ENCODE measurements at regions of chr9 and their contacts with region 1.

Region 1: DNA sequence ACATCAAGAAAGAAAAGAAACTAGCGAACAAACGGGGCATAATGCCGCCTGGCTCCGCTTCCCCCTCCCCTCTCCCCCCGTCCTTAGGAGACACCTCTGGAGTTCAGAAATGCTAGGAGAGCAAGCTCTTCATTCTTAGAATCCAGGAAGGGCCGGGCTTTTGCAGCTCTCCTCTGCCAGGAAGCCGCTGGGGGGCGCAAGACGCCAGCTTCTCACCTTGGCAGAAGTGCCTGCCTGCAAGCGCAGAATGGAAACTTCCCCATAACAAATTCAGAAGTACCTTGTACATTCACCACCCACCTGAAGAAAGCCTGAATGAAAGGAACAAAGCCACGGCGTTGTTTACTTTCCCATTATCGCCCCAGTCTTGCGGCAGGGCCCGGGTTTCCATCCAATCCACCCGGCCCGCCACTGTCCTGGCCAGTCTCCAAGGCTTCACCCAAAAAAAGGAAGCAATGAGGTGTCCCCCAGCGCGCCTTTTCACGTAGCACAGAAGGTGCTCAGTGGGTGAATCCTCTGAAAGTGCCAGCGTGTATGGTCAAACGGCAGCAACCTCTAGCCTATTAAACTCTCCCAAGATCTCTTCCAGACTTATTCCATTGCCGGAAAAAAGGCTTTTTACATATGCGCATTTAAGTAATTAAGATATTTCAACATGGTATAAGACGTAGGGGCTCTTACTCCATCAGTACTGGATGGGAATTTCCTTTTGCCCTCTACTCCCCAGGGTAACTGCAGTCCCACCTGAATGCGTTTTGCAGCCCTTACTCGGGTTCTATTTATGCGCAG is 1.6 kb upstream of the GADD45G start:
- DNase-seq: peak; percentile 77
- H3K4me3 ChIP-seq: no peak overlapping the region
- H3K27ac ChIP-seq: no peak overlapping the region
- H3K4me1 ChIP-seq: peaks cover 34% of the 10 kb centered on the region
- H3K27me3 ChIP-seq: peaks cover 7 to 14% of the 10 kb centered on the region in 2 experiments
- CTCF ChIP-seq: peak; percentile 85 to 93
- POLR2A ChIP-seq: no peak

Region 2: DNA sequence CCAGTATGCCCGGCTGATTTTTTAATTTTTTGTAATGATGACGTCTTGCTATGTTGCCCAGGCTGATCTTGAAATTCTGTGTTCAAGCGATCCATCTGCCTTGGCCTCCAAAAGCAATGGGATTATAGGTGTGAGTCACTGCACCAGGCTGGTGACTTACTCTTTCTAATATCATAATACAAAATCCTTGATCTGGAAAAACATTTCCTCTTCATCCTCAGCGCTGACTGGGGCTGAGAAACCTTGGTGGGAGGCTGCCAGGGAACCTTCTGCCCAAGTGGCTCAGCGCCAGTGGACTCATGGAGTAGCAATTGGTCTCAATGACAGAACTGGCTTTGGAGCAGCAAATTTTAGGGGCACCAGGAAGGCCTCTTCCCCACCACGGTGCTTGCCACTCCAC is 87.8 kb before region 1 on chr9:
- CTCF ChIA-PET with region 1: no interaction called
- POLR2A ChIA-PET with region 1: no interaction called
- dilution Hi-C with region 1: no loop called
- intact Hi-C with region 1: no loop called
- DNase-seq: no peak
- H3K4me3 ChIP-seq: no peak overlapping the region
- H3K27ac ChIP-seq: no peak overlapping the region
- H3K4me1 ChIP-seq: peaks cover 4% of the 10 kb centered on the region
- H3K27me3 ChIP-seq: peaks cover 5 to 10% of the 10 kb centered on the region in 2 experiments
- CTCF ChIP-seq: no peak
- POLR2A ChIP-seq: no peak

Region 3: DNA sequence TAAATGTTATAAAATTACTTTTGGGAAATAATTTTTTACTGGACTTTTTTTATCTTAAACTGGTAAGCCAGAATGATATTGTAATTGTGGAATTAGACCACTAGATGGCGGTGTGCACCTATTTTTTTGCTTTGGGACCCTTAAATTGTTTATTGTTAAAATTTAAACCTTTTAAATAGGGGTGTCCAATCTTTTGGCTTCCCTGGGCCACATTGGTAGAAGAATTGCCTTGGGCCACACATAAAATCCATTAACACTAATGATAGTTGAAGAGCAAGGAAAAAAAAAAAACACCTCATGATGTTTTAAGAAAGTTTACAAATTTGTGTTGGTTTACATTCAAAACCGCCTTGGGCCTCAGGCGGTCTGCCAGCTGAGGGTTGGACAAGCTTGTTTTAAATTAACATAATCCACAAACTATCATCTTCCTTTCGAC is 26.8 kb before region 1 on chr9:
- CTCF ChIA-PET with region 1: interaction called, 35 read pairs
- POLR2A ChIA-PET with region 1: no interaction called
- dilution Hi-C with region 1: no loop called
- intact Hi-C with region 1: loop called (anchors 2 kb)
- DNase-seq: peak; percentile 48
- H3K4me3 ChIP-seq: no peak overlapping the region
- H3K27ac ChIP-seq: no peak overlapping the region
- H3K4me1 ChIP-seq: no peaks in the 10 kb centered on the region
- H3K27me3 ChIP-seq: peaks cover 15 to 21% of the 10 kb centered on the region in 2 experiments
- CTCF ChIP-seq: peak; percentile 33 to 37
- POLR2A ChIP-seq: no peak

Region 4: DNA sequence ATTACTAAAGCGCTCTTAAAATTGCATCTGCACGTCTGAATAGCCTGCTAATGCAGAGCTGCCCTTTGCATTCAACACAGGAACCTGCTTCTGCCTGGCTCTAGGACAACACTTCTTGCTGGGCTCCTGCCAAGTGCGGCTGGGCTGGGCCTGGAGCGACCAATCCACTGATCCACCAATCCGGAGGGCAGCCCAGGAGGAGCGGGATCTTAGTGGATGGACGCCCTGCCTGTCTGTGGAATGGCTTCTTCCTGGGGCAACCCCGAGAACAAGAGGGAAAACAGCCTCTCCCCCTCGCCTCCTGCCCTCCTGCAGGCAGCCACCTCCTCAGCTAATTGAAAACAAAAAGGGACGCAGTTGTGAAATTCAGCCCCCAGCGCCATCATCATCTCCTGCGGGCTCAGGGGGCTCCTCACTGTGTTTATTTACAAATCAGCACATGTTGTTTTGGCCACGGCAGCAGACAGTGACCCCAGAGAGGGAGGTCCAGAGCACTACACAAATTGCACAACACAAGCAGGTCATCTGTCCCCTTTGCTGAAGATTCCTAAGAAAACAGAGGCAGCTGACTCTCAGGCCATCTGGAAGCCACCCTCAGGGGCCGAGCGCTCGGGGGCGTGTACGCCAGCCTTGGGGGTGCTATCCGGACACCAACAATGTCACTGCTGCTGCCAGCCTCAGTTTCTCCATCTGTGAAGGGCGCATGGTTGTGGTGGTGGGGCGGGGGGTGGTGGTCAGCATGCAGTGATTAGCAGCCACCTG is 59.0 kb after region 1 on chr9:
- CTCF ChIA-PET with region 1: interaction called, 10 read pairs
- POLR2A ChIA-PET with region 1: no interaction called
- dilution Hi-C with region 1: no loop called
- intact Hi-C with region 1: loop called (anchors 2 kb)
- DNase-seq: peak; percentile 98
- H3K4me3 ChIP-seq: peak overlapping the region in 2 of 3 experiments; percentile 18 to 39
- H3K27ac ChIP-seq: no peak overlapping the region
- H3K4me1 ChIP-seq: peaks cover 9% of the 10 kb centered on the region
- H3K27me3 ChIP-seq: no peaks in the 10 kb centered on the region
- CTCF ChIP-seq: no peak
- POLR2A ChIP-seq: no peak

Region 5: DNA sequence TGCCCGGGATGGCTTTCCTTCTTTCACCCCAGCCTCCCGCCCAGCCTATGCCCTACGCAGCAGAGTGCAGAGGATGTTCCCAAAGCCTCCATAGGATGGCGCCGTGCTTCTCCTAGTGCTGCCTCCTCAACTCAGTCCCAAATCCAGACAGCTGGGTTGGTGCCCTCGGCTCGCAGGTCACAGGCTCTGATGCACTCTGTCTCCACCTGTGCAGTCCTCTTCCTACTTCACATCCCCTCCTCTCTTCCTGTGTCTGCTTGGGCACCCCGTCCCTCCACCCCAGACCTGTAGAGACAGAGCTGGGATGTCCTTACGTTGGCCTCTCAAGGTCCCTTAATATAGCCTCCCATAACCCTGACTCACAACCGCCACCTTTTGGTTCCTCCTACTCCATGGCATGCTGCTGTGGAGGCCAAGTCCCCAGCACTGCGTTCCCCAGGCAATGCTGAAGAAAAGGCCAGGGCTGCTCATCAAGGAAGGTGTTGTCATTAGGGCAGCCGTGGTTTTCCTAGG is 316.1 kb after region 1 on chr9:
- CTCF ChIA-PET with region 1: interaction called, 113 read pairs
- POLR2A ChIA-PET with region 1: no interaction called
- dilution Hi-C with region 1: no loop called
- intact Hi-C with region 1: loop called (anchors 1 kb)
- DNase-seq: no peak
- H3K4me3 ChIP-seq: no peak overlapping the region
- H3K27ac ChIP-seq: no peak overlapping the region
- H3K4me1 ChIP-seq: no peaks in the 10 kb centered on the region
- H3K27me3 ChIP-seq: no peaks in the 10 kb centered on the region
- CTCF ChIP-seq: no peak
- POLR2A ChIP-seq: no peak

Region 6: DNA sequence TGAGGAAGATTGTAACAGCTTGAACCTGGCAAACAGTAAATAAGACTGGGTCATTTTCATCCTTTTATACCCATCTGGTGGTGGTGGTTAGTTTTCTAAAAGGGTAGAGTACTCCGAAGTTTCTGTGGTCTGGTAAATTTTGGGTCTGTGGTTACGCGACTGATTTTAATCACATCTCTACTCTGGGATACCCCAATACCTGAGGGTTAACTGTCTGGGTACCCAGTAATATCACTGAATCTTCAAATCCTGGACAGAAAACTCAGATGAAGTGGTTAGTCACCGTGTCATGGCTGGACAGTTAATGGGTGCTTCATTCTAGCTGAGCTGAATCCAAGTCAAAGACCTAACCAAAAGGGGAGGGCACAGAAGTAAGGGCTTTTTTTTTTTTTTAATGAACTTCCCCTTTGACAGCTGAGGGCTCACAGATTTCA is 475.8 kb after region 1 on chr9:
- CTCF ChIA-PET with region 1: interaction called, 15 read pairs
- POLR2A ChIA-PET with region 1: no interaction called
- dilution Hi-C with region 1: no loop called
- intact Hi-C with region 1: no loop called
- DNase-seq: no peak
- H3K4me3 ChIP-seq: no peak overlapping the region
- H3K27ac ChIP-seq: no peak overlapping the region
- H3K4me1 ChIP-seq: no peaks in the 10 kb centered on the region
- H3K27me3 ChIP-seq: no peaks in the 10 kb centered on the region
- CTCF ChIP-seq: no peak
- POLR2A ChIP-seq: no peak

Region 7: DNA sequence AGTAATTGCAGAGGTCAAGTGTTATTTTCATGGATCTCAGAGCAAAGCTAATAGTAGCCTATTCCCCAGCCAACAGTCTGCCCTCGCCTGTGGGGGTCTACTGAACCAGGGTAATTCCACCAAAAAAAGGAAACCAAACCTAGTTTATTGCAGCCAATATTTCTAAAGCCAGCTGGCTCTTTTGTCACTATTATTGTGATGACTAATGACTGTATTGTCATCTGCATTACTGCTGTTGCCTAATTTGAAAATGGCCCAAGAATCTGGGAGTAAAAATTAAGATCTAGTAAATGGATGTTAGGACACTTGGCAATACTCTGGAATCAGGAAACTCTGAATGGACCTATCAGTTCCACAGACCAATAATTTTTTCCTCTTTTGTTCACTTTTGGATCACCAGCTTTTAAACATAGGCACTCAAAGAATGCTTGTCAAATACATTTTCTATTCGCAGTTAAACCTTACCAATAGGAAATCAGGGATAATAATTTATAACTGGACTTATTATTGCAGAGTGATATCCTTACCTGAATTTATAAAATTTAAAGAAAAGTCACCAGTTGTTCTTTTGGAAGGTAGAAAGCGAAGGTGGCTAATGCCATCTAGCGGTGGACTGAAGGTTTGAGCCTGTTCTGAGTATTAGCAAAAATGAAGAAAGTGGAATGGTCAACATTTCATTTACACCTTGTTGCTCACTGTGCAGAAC is 1267.6 kb after region 1 on chr9:
- CTCF ChIA-PET with region 1: interaction called, 96 read pairs
- POLR2A ChIA-PET with region 1: no interaction called
- dilution Hi-C with region 1: no loop called
- intact Hi-C with region 1: loop called (anchors 1 kb)
- DNase-seq: peak; percentile 32
- H3K4me3 ChIP-seq: no peak overlapping the region
- H3K27ac ChIP-seq: no peak overlapping the region
- H3K4me1 ChIP-seq: no peaks in the 10 kb centered on the region
- H3K27me3 ChIP-seq: no peaks in the 10 kb centered on the region
- CTCF ChIP-seq: peak; percentile 63 to 65
- POLR2A ChIP-seq: no peak